ENCODE measurements at regions of chr3 and their contacts with region 1.

Region 1: GRCh38 chr3:12663936-12664908 is at the start of gene RAF1:
- DNase-seq: peak; percentile 99
- ATAC-seq: peak; percentile 89 to 94 (median 92)
- H3K4me3 ChIP-seq: peak within 1 kb of the TSS; percentile 92
- H3K27ac ChIP-seq: peak within 1 kb of the TSS; percentile 99
- H3K4me1 ChIP-seq: peaks cover 30% of the 10 kb centered on the region
- H3K27me3 ChIP-seq: no peaks in the 10 kb centered on the region
- CTCF ChIP-seq: no peak
- total RNA-seq, gene RAF1: 109 to 221 (median 160) TPM

Region 2: DNA sequence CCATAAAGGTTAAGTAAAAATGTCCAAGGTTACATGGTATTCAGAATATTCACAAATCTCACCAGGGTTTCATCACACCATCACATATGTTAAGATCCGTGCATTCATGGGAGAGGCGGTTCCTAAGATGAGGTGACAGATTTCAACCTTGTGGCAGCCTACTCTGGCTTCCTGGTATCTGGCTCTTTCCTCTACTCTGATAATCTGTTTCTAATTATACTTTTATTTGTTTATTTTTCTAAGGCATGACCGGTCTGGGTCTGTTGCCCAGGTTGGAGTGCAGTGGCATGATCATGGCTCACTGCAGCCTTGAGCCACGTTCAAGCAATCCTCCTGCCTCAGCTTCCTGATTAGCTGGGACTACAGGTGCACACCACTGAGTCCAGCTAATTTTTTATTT is 34.7 kb before region 1 on chr3:
- intact Hi-C with region 1: loop called in 1 of 2 experiments (anchors 5 kb)
- DNase-seq: peak in 1 of 2 donors; percentile 63
- ATAC-seq: peak; percentile 60 to 88 (median 84)
- H3K4me3 ChIP-seq: peak overlapping the region; percentile 12
- H3K27ac ChIP-seq: peak overlapping the region; percentile 81
- H3K4me1 ChIP-seq: peaks cover 59% of the 10 kb centered on the region
- H3K27me3 ChIP-seq: no peaks in the 10 kb centered on the region
- CTCF ChIP-seq: no peak

Region 3: DNA sequence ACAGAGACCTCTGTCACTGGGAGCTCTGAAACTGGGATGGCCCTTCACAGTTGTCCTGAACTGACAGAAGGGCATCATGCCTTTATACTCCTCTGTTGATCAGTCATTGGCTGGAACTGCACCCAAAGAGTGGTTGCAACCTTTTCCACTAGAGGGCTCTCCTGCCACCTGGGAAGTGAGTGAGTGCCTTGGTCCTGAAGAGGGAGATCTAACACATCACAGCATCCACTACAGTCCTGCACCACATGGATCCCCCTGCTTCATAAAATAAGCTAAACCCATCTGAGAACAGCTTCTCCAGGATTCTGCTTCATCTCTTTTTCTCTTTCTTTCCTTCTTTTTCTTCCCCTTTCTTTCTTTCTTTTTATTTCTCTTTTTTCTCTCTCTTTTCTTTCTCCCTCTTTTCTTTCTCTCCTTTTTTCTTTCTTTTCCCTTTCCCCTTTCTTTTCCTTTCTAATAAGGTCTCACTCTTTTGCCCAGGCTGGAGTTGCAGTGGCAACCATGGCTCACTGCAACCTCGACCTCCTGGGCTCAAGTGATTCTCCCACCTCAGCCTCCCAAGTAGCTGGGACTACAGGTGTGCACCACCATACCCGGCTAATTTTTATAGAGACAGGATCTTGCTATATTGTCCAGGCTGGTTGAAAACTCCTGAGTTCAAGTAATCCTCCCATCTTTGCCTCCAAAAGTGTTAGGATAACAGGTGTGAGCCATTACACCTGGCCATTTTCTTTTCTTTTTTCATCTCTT is 42.5 kb after region 1 on chr3:
- intact Hi-C with region 1: loop called in 1 of 2 experiments (anchors 1 kb)
- DNase-seq: peak; percentile 31 to 58
- ATAC-seq: peak; percentile 84 to 93 (median 87)
- H3K4me3 ChIP-seq: no peak overlapping the region
- H3K27ac ChIP-seq: peak overlapping the region; percentile 21
- H3K4me1 ChIP-seq: peaks cover 11% of the 10 kb centered on the region
- H3K27me3 ChIP-seq: no peaks in the 10 kb centered on the region
- CTCF ChIP-seq: peak; percentile 80

Region 4: DNA sequence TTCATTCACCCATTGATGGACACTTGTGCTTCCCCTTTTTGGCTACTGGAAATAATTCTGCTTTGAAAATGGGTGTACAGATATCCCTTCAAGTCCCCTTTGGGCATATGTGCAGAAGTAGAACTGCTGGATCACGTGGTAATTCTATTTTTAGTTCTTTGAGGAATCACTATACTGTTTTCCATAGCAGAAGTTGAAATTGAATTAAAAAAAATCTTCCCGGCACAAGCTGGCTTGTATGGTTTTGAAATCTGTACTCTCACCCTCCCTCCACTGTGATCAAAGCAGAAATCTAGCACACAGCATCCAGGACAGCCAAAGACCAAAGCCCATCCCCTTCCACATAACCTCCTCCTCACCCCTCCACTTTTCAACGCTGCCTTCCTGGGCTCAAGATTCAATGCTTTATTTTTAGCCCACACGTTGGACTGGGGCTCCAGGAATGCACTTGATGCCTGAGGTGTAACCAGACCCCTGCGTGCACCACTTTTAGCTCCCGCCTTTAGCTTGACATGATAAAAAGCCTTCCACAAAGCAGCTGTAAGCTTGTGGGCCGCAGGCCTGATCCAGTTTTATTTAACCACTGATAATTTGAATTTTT is 64.9 kb after region 1 on chr3:
- intact Hi-C with region 1: loop called in 1 of 2 experiments (anchors 2 kb)
- DNase-seq: peak; percentile 47 to 78
- ATAC-seq: peak; percentile 95 to 98 (median 96)
- H3K4me3 ChIP-seq: peak overlapping the region; percentile 3
- H3K27ac ChIP-seq: peak overlapping the region; percentile 88
- H3K4me1 ChIP-seq: peaks cover 22% of the 10 kb centered on the region
- H3K27me3 ChIP-seq: no peaks in the 10 kb centered on the region
- CTCF ChIP-seq: no peak

Region 5: DNA sequence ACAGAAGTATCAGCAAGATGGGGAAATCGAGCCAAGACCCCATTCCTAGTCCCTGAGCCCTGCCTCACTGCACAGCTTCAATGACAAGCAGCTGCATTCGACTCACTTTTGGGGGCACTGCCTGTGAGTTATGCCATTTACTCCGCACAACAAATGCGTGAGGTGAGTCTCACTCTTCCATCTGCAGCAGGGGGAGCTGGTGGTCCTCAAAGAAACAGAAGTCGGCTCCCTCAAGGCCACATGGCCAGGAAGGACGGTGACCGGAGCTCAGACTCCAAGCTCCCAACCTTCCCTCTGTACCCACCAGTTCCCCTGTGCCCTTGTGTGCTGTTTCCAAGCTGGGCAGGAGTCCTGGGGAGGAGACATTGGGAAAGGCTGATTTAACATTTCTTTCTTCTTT is 536.7 kb after region 1 on chr3:
- intact Hi-C with region 1: no loop called
- DNase-seq: peak in 1 of 2 donors; percentile 22
- ATAC-seq: no peak
- H3K4me3 ChIP-seq: no peak overlapping the region
- H3K27ac ChIP-seq: no peak overlapping the region
- H3K4me1 ChIP-seq: no peaks in the 10 kb centered on the region
- H3K27me3 ChIP-seq: peaks cover 0 to 14% (median 3%) of the 10 kb centered on the region in 3 donors
- CTCF ChIP-seq: no peak